HCT116 (cell line): ENCODE measurements at regions of chr18 and their contacts with region 1.

Region 1: DNA sequence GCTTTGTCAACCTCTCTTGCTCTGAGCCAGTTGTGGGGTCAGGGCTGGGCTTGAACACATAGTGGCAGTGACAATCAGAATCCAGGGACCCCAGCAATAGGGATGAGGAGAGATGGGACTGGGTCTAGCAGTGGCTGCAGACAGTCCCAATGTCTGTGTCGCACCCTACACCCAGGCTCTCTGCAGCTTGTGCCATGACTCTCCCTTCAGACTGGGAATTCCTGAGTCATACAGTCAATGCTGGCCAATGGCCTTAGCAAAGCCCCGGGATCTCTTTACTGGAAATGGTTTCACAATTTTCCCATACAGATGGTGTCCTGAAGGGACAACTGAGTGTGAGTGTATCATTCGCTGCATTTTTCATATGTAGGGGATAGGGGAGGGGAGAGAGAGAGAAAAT is 74.2 kb upstream of the CELF4 start:
- DNase-seq: no peak
- ATAC-seq: no peak
- H3K4me3 ChIP-seq: no peak overlapping the region
- H3K27ac ChIP-seq: no peak overlapping the region
- H3K4me1 ChIP-seq: peaks cover 0 to 4% of the 10 kb centered on the region in 2 experiments; a peak in 1 of 4 replicates
- H3K27me3 ChIP-seq: no peaks in the 10 kb centered on the region
- CTCF ChIP-seq: no peak
- POLR2A ChIP-seq: no peak
- RAD21 ChIP-seq: no peak

Region 2: DNA sequence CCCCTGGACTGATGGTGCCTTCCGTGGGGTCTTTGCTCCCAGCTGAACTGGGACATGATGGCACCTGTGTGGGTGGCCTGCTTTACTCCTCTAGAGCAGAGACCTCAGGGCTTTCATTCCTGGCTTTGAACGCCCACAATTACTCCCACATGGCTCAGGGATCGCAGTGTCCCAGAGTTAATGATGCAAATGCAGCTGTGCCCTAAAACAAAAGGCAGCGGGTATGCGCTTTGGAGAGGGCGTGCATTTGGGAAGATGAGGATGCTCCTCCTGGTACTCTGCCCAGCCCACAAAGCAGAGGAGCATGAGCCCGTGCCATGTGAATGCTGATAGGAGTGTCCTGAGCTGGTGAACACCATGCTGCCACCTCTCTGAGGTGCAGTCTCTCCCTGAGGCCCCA is 1169.0 kb before region 1 on chr18:
- CTCF ChIA-PET with region 1: no interaction called
- POLR2A ChIA-PET with region 1: no interaction called
- RAD21 ChIA-PET with region 1: no interaction called
- intact Hi-C with region 1: loop called (anchors 10 kb)
- DNase-seq: no peak
- ATAC-seq: no peak
- H3K4me3 ChIP-seq: no peak overlapping the region
- H3K27ac ChIP-seq: no peak overlapping the region
- H3K4me1 ChIP-seq: no peaks in the 10 kb centered on the region
- H3K27me3 ChIP-seq: peaks cover 11% of the 10 kb centered on the region; the same call in 1 of the 2 replicates
- CTCF ChIP-seq: no peak
- POLR2A ChIP-seq: no peak
- RAD21 ChIP-seq: no peak